RWPE1 (cell line): ENCODE measurements at regions of chr14 and their contacts with region 1.

Region 1: GRCh38 chr14:21103710-21104447 is 3.0 kb downstream of the TMEM253 start:
- DNase-seq: peak; percentile 95
- H3K27ac ChIP-seq: peak overlapping the region; percentile 98
- CTCF ChIP-seq: no peak

Region 2: DNA sequence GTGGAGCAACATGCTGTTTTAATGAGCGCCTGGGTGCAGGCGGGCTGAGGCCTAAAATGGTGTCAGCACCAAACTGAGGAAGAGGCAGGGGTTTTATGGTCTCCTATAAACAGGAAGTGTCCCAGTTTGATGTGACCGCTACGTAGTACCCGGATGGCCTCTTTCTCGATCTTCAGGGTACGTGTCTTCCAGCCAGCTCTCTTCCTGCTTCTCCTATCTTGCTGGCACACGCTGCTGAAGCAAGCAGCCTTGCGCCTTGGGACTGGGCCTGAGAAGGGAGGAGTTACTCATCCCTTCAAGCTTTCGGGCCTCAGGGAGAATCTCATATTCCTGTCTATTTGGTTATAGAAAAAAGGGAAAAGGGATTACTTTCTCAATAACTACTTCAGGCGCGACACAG is 273.0 kb before region 1 on chr14:
- CTCF ChIA-PET with region 1: no interaction called
- POLR2A ChIA-PET with region 1: no interaction called
- DNase-seq: no peak
- H3K27ac ChIP-seq: no peak overlapping the region
- CTCF ChIP-seq: no peak

Region 3: GRCh38 chr14:21039585-21040369 is 64.1 kb before region 1 on chr14:
- CTCF ChIA-PET with region 1: interaction called, 10 read pairs
- POLR2A ChIA-PET with region 1: no interaction called
- DNase-seq: peak; percentile 72
- H3K27ac ChIP-seq: no peak overlapping the region
- CTCF ChIP-seq: peak; percentile 68

Region 4: GRCh38 chr14:21071225-21072030 is 32.5 kb before region 1 on chr14:
- CTCF ChIA-PET with region 1: interaction called, 70 read pairs
- POLR2A ChIA-PET with region 1: interaction called, 4 read pairs
- DNase-seq: peak; percentile 42
- H3K27ac ChIP-seq: peak overlapping the region; percentile 83
- CTCF ChIP-seq: no peak

Region 5: GRCh38 chr14:21092273-21093011 is 11.4 kb before region 1 on chr14:
- CTCF ChIA-PET with region 1: interaction called, 72 read pairs
- POLR2A ChIA-PET with region 1: no interaction called
- DNase-seq: no peak
- H3K27ac ChIP-seq: peak overlapping the region; percentile 32
- CTCF ChIP-seq: peak; percentile 99

Region 6: GRCh38 chr14:21136024-21136423 is 32.1 kb after region 1 on chr14:
- CTCF ChIA-PET with region 1: interaction called, 10 read pairs
- POLR2A ChIA-PET with region 1: no interaction called
- DNase-seq: peak; percentile 49
- H3K27ac ChIP-seq: no peak overlapping the region
- CTCF ChIP-seq: peak; percentile 79

Region 7: GRCh38 chr14:21163871-21164291 is 60.0 kb after region 1 on chr14:
- CTCF ChIA-PET with region 1: no interaction called
- POLR2A ChIA-PET with region 1: no interaction called
- DNase-seq: no peak
- H3K27ac ChIP-seq: no peak overlapping the region
- CTCF ChIP-seq: no peak